Calu3 (cell line): ENCODE measurements at regions of chr11 and their contacts with region 1.

Region 1: DNA sequence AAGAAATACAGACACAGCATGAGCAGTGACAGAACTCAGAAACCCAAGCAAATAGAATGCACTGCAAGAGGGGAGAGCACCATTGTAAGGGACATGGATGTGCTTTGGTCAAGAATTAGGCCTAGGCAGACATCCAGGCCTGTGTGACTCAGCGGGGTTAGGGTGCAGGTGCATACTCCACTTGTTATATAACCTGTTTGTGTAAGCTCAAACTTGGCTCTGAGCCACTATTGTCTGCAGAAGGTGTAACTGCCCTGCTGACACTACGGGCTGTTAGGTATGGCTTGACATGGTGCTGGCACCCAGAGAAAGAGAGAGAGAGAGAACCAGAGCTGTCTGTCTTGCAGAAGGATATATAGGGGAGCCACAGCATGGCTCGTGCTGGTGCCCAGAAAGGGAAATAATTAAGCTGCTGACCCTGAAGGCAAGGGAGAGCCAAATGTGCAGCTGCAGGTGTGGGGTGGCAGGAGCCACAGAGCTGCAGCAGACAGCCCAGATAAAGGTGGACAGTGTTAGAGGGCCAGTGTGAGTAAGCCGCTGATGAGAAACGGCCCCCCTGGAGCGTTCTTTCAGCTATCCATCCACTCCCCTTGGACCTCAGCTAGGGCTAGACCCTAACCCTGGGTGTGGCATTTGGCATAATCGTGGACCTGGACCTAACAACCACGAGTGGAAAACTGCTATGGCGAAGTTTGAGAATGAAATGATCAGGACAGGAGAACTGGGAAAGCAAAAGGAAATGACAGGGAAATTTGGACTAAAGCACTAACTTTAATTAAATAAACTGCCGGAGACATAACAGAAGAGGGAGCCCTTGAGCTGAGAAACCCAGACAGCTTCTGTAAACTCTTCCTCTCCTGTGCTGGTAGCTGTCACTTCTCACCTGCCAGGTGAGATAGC is 253.0 kb upstream of the CCDC179 start:
- DNase-seq: peak; percentile 73
- H3K4me3 Mint-ChIP-seq: peak overlapping the region; percentile 37
- H3K27ac Mint-ChIP-seq: peak overlapping the region; percentile 26
- H3K4me1 Mint-ChIP-seq: peaks cover 28% of the 10 kb centered on the region
- H3K27me3 Mint-ChIP-seq: no peaks in the 10 kb centered on the region
- CTCF ChIP-seq: peak; percentile 20

Region 2: GRCh38 chr11:22920939-22921565 is 192.2 kb before region 1 on chr11:
- CTCF ChIA-PET with region 1: interaction called, 3 read pairs
- intact Hi-C with region 1: loop called (anchors 2 kb)
- DNase-seq: peak; percentile 41
- H3K4me3 Mint-ChIP-seq: no peak overlapping the region
- H3K27ac Mint-ChIP-seq: peak overlapping the region; percentile 22
- H3K4me1 Mint-ChIP-seq: peaks cover 21% of the 10 kb centered on the region
- H3K27me3 Mint-ChIP-seq: no peaks in the 10 kb centered on the region
- CTCF ChIP-seq: peak; percentile 58

Region 3: DNA sequence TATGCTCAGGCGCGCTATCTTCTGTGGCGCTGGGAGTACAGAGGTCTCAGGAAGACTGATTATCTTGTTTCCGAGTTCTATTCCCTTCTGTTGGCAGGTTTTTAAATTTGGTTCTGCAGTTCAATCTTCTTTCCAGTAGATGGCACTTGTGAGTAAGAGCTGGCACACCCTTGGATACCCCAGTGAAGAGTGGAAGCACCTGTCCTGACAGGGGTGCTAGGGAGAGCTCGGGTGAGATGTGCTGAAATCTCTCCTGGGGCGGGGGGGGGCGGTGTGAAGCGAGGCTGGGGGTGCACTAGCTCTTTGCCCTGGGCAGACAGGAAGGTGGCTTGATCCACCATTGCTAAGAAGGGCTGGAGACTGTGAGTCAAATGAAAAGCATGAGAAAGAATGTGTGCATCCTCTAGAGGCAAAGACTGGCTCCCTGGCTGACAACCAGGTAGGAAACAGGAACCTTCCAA is 426.9 kb after region 1 on chr11:
- CTCF ChIA-PET with region 1: interaction called, 10 read pairs
- intact Hi-C with region 1: no loop called
- DNase-seq: peak; percentile 34
- H3K4me3 Mint-ChIP-seq: peak overlapping the region; percentile 29
- H3K27ac Mint-ChIP-seq: no peak overlapping the region
- H3K4me1 Mint-ChIP-seq: peaks cover 22% of the 10 kb centered on the region
- H3K27me3 Mint-ChIP-seq: no peaks in the 10 kb centered on the region
- CTCF ChIP-seq: peak; percentile 65

Region 4: GRCh38 chr11:24234822-24235508 is 1121.7 kb after region 1 on chr11:
- CTCF ChIA-PET with region 1: interaction called, 5 read pairs
- intact Hi-C with region 1: loop called (anchors 5 kb)
- DNase-seq: peak; percentile 62
- H3K4me3 Mint-ChIP-seq: no peak overlapping the region
- H3K27ac Mint-ChIP-seq: no peak overlapping the region
- H3K4me1 Mint-ChIP-seq: peaks cover 8% of the 10 kb centered on the region
- H3K27me3 Mint-ChIP-seq: no peaks in the 10 kb centered on the region
- CTCF ChIP-seq: no peak